CD8-positive, alpha-beta T cell (primary cell): ENCODE measurements at regions of chr5 and their contacts with region 1.

Region 1: GRCh38 chr5:139670369-139671095 is 22.4 kb downstream of the CXXC5 start:
- DNase-seq: peak in 5 of 9 experiments; percentile 34 to 68 (median 53)
- ATAC-seq: peak; percentile 31
- H3K4me3 ChIP-seq: peak overlapping the region; percentile 68 to 72
- H3K4me3 Mint-ChIP-seq: peak overlapping the region; percentile 79
- H3K27ac ChIP-seq: peak overlapping the region; percentile 26 to 88
- H3K27ac Mint-ChIP-seq: peak overlapping the region; percentile 90
- H3K4me1 ChIP-seq: peaks cover 53% of the 10 kb centered on the region
- H3K4me1 Mint-ChIP-seq: peaks cover 47% of the 10 kb centered on the region
- H3K27me3 ChIP-seq: no peaks in the 10 kb centered on the region
- H3K27me3 Mint-ChIP-seq: no peaks in the 10 kb centered on the region
- CTCF ChIP-seq: peak; percentile 28

Region 2: GRCh38 chr5:139651853-139652787 is 18.4 kb before region 1 on chr5:
- CTCF ChIA-PET with region 1: interaction called, 5 read pairs
- POLR2A ChIA-PET with region 1: interaction called, 5 read pairs
- intact Hi-C with region 1: loop called in 1 of 2 experiments (anchors 2 kb)
- DNase-seq: peak in 7 of 9 experiments; percentile 43 to 88 (median 79)
- ATAC-seq: peak; percentile 65
- H3K4me3 ChIP-seq: no peak overlapping the region
- H3K4me3 Mint-ChIP-seq: peak overlapping the region; percentile 16
- H3K27ac ChIP-seq: peak overlapping the region in 1 of 2 experiments; percentile 26
- H3K27ac Mint-ChIP-seq: peak overlapping the region; percentile 47
- H3K4me1 ChIP-seq: peaks cover 60% of the 10 kb centered on the region
- H3K4me1 Mint-ChIP-seq: peaks cover 44% of the 10 kb centered on the region
- H3K27me3 ChIP-seq: peaks cover 23 to 25% of the 10 kb centered on the region in 2 experiments
- H3K27me3 Mint-ChIP-seq: peaks cover 30% of the 10 kb centered on the region
- CTCF ChIP-seq: no peak

Region 3: GRCh38 chr5:139690064-139690802 is 19.7 kb after region 1 on chr5:
- CTCF ChIA-PET with region 1: interaction called, 14 read pairs
- POLR2A ChIA-PET with region 1: no interaction called
- intact Hi-C with region 1: no loop called
- DNase-seq: peak in 4 of 9 experiments; percentile 22 to 64 (median 38)
- ATAC-seq: peak; percentile 77
- H3K4me3 ChIP-seq: no peak overlapping the region
- H3K4me3 Mint-ChIP-seq: no peak overlapping the region
- H3K27ac ChIP-seq: no peak overlapping the region
- H3K27ac Mint-ChIP-seq: no peak overlapping the region
- H3K4me1 ChIP-seq: peaks cover 6% of the 10 kb centered on the region
- H3K4me1 Mint-ChIP-seq: peaks cover 19% of the 10 kb centered on the region
- H3K27me3 ChIP-seq: no peaks in the 10 kb centered on the region
- H3K27me3 Mint-ChIP-seq: no peaks in the 10 kb centered on the region
- CTCF ChIP-seq: peak; percentile 44

Region 4: DNA sequence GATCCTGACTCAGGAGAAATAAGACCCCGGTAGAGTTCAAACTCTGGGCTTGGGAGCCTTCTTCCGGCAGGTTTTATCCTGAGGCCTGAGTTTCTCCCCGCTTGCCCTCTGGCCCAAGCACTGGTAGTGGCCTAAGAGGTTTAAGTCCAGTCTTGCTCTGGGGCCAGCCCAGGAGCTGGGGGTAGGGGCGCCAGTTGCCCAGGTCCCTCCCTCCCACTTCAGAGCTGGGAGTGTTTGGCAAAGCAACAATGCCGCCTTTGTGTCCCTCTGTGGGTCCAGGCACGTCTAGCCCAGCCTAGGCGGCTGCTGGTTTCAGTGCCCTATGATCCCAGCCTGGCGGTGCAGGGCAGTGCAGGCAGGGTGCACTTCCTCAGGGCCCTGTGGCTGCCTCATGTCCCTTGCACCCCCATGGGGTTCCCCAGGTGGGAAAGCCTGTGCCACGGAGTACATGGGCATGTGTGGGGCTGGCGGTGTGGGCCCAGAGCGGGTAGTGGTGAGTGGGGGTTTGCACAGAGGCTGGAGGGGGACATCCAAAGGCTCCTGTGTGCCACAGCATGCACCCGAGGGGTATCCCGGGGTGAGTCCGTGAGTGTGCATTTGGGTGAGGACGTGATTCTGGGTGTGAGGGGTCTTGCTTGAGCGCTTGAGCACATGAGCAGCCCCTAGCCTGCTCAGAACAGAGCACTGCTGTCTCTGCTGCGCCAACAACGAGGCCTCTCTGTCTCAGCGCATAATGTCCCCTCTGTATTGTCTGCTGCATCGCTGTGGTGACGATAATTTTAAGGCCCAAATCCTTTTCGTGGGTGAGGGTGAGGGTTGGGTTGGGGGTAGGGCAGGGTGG is 63.4 kb after region 1 on chr5:
- CTCF ChIA-PET with region 1: no interaction called
- POLR2A ChIA-PET with region 1: no interaction called
- intact Hi-C with region 1: no loop called
- DNase-seq: peak in 1 of 9 experiments; percentile 2
- ATAC-seq: no peak
- H3K4me3 ChIP-seq: no peak overlapping the region
- H3K4me3 Mint-ChIP-seq: no peak overlapping the region
- H3K27ac ChIP-seq: no peak overlapping the region
- H3K27ac Mint-ChIP-seq: no peak overlapping the region
- H3K4me1 ChIP-seq: no peaks in the 10 kb centered on the region
- H3K4me1 Mint-ChIP-seq: no peaks in the 10 kb centered on the region
- H3K27me3 ChIP-seq: no peaks in the 10 kb centered on the region
- H3K27me3 Mint-ChIP-seq: no peaks in the 10 kb centered on the region
- CTCF ChIP-seq: no peak